Gastrocnemius medialis (tissue), 4 donors: ENCODE measurements at regions of chr4 and their contacts with region 1.

Region 1: GRCh38 chr4:15655229-15656037 is at the start of gene FBXL5:
- DNase-seq: peak; percentile 42 to 74
- ATAC-seq: peak; percentile 78 to 87
- H3K4me3 ChIP-seq: peak within 1 kb of the TSS; percentile 74 to 94 (median 83)
- H3K27ac ChIP-seq: peak within 1 kb of the TSS; percentile 97 to 100 (median 98)
- H3K4me1 ChIP-seq: peaks cover 39 to 45% of the 10 kb centered on the region in 2 donors
- H3K27me3 ChIP-seq: no peaks in the 10 kb centered on the region
- CTCF ChIP-seq: no peak
- POLR2A ChIP-seq: peak; percentile 81 to 84
- total RNA-seq, gene FBXL5: 81.7 to 106 (median 89.8) TPM

Region 2: DNA sequence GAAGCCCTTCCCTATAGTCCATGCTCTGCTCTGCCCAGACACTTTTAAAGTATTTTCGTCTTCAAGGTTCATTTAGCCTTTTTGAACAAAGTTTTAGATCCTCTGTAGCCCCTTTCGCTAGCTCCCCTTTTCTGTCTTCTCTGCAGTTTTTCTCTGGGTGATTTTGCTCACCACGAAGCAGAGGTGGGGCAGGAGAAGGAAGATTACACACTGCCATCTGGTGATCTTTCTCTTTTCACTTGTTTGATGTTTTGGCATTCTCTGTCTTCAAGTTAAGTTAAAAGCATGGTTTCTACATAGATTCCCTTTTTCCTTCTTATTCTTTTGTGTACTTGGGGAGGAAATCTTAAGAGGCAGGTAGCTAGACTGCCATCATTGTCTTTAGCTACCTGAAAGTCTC is 141.9 kb before region 1 on chr4:
- in situ Hi-C with region 1: no loop called
- intact Hi-C with region 1: no loop called
- DNase-seq: no peak
- ATAC-seq: no peak
- H3K4me3 ChIP-seq: no peak overlapping the region
- H3K27ac ChIP-seq: no peak overlapping the region
- H3K4me1 ChIP-seq: no peaks in the 10 kb centered on the region
- H3K27me3 ChIP-seq: no peaks in the 10 kb centered on the region
- CTCF ChIP-seq: no peak
- POLR2A ChIP-seq: no peak

Region 3: GRCh38 chr4:15681207-15682015 is 26.0 kb after region 1 on chr4 and contains the start of gene FAM200B:
- in situ Hi-C with region 1: no loop called
- intact Hi-C with region 1: loop called (anchors 1 kb)
- DNase-seq: peak; percentile 91 to 95
- ATAC-seq: peak; percentile 98
- H3K4me3 ChIP-seq: peak within 1 kb of the TSS; percentile 82 to 94 (median 86)
- H3K27ac ChIP-seq: peak within 1 kb of the TSS; percentile 82 to 89 (median 84)
- H3K4me1 ChIP-seq: peaks cover 9 to 15% of the 10 kb centered on the region in 2 donors
- H3K27me3 ChIP-seq: no peaks in the 10 kb centered on the region
- CTCF ChIP-seq: peak in 2 of 5 experiments; percentile 10 to 27
- POLR2A ChIP-seq: peak; percentile 39 to 58
- total RNA-seq, gene FAM200B: 16.5 to 33.3 (median 21.1) TPM

Region 4: DNA sequence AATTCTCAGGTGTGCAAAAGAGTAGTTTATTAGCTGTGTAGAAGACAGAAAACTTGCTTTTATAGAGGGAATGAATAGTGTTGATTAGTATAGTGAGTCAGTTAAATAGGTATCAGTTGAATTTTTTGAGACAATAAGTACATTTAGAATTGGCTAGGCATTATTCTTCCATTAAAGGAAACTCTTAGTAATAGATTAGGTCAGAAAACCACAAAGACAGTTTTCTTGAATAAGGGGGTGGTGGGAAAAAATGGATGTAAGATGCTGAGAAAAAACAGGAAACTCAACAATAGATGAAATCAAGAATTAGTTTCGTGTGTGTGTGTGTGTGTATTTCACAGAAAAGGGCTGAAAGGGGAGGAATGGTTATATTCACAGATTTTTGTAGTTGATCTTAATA is 139.5 kb after region 1 on chr4:
- in situ Hi-C with region 1: no loop called
- intact Hi-C with region 1: loop called (anchors 5 kb)
- DNase-seq: no peak
- ATAC-seq: no peak
- H3K4me3 ChIP-seq: no peak overlapping the region
- H3K27ac ChIP-seq: no peak overlapping the region
- H3K4me1 ChIP-seq: peaks cover 5 to 24% of the 10 kb centered on the region in 2 donors
- H3K27me3 ChIP-seq: no peaks in the 10 kb centered on the region
- CTCF ChIP-seq: no peak
- POLR2A ChIP-seq: no peak